Panc1 (cell line): ENCODE measurements at regions of chr4 and their contacts with region 1.

Region 1: DNA sequence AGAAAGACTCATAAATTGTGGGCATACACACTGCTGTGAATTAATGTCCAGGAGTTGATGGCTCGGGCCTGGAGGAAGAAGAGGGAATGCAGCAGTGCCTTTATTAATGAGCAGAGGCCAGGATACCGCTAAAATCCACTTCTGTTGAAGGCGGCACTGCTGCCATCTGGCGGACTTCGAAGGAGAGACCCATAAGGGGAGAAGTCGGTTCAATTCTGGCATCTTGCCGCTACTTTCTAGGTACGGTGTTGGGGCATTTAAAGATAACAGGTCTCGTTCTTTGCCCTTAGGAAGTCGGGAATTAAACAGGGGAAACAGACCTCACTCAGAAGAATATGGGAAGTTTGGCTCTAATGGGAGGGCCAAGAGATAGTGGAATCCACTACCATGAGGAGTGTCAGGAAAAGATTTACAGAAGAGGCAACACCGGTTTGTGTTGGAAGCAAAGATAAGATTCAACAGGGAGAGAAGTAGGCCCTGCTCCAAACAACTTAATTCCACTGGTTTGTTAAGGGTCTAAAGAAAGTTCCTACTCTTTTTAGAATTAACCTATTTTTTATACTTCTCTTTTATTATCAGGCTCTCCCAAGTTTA is 133.6 kb upstream of the GIMD1 start:
- DNase-seq: peak; percentile 10
- ATAC-seq: peak; percentile 71
- H3K4me3 ChIP-seq: no peak overlapping the region
- H3K27ac ChIP-seq: no peak overlapping the region
- H3K4me1 ChIP-seq: no peaks in the 10 kb centered on the region
- H3K27me3 ChIP-seq: no peaks in the 10 kb centered on the region; the same call in 1 of the 2 replicates
- CTCF ChIP-seq: peak; percentile 76

Region 2: GRCh38 chr4:106266201-106266600 is 236.0 kb before region 1 on chr4:
- CTCF ChIA-PET with region 1: no interaction called
- POLR2A ChIA-PET with region 1: no interaction called
- in situ Hi-C with region 1: no loop called
- intact Hi-C with region 1: loop called (anchors 10 kb)
- DNase-seq: peak; percentile 13
- ATAC-seq: no peak
- H3K4me3 ChIP-seq: no peak overlapping the region
- H3K27ac ChIP-seq: no peak overlapping the region
- H3K4me1 ChIP-seq: no peaks in the 10 kb centered on the region
- H3K27me3 ChIP-seq: no peaks in the 10 kb centered on the region
- CTCF ChIP-seq: peak; percentile 45; the same call in 1 of the 2 replicates

Region 3: DNA sequence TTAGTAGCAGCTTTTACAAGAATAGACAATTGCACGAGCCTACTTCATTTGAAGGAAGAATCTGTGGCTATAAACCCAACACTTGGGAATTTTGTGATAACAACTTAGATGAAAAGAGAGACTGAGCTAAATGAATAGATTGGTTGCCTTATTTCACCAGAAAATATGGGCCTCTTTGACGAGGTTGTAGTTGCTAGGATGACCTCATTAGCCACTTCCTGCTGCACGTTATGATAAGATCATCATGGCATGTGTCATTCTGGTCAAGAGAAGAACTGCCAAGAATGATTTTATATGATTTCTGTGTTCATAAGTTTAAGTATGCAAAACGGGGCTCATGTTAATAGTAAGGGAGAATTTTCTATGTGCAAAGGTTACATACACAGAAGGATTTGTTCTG is 188.3 kb after region 1 on chr4:
- CTCF ChIA-PET with region 1: no interaction called
- POLR2A ChIA-PET with region 1: no interaction called
- in situ Hi-C with region 1: no loop called
- intact Hi-C with region 1: no loop called
- DNase-seq: no peak
- ATAC-seq: no peak
- H3K4me3 ChIP-seq: no peak overlapping the region
- H3K27ac ChIP-seq: no peak overlapping the region
- H3K4me1 ChIP-seq: no peaks in the 10 kb centered on the region
- H3K27me3 ChIP-seq: no peaks in the 10 kb centered on the region
- CTCF ChIP-seq: no peak

Region 4: GRCh38 chr4:106753426-106753825 is 251.2 kb after region 1 on chr4:
- CTCF ChIA-PET with region 1: no interaction called
- POLR2A ChIA-PET with region 1: no interaction called
- in situ Hi-C with region 1: no loop called
- intact Hi-C with region 1: no loop called
- DNase-seq: no peak
- ATAC-seq: no peak
- H3K4me3 ChIP-seq: no peak overlapping the region
- H3K27ac ChIP-seq: no peak overlapping the region
- H3K4me1 ChIP-seq: no peaks in the 10 kb centered on the region
- H3K27me3 ChIP-seq: no peaks in the 10 kb centered on the region
- CTCF ChIP-seq: no peak

Region 5: GRCh38 chr4:106868381-106869035 is 366.3 kb after region 1 on chr4:
- CTCF ChIA-PET with region 1: no interaction called
- POLR2A ChIA-PET with region 1: no interaction called
- in situ Hi-C with region 1: no loop called
- intact Hi-C with region 1: no loop called
- DNase-seq: no peak
- ATAC-seq: no peak
- H3K4me3 ChIP-seq: no peak overlapping the region
- H3K27ac ChIP-seq: no peak overlapping the region
- H3K4me1 ChIP-seq: no peaks in the 10 kb centered on the region
- H3K27me3 ChIP-seq: no peaks in the 10 kb centered on the region
- CTCF ChIP-seq: no peak